Tibial artery (tissue), 4 donors: ENCODE measurements at regions of chr7 and their contacts with region 1.

Region 1: DNA sequence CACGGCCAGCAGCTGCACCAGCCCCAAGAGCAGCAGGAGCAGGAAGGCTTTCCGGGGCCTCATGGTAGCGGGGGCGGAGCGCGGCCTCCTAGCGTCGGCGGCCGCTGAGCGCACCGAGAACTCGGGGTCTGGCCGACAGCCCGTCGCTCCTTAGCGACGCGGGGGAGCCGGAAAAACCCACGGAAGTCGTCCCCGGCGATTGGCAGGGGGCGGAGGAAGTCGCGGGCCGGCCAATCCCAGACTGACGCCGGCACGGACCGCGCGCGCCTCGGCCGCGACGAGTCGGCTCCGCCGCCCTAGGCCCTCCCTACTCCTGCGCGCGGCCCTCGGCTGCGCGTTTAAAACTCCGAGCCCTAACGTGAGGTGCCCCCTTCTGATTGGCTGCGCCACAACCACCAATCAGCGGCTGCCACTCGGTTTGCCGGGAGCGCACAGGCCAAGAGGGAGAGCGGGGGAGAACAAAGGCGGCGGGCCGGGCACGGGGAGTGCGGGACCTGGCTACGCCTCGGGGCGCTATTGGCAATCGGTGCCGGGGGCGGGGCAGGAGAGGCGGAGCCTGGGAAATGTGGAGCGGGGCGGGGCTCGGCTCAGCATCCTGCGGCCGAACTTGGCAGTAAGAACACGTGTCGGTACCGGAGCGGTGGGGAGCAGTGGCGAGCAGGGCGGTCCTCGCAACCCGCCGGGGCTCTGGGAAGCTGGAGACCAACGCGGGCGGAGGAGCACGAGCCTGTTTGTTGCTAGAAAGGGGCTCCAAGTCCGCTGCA is at the start of gene PDIA4:
- DNase-seq: peak; percentile 99 to 100
- H3K4me3 ChIP-seq: peak within 1 kb of the TSS; percentile 73 to 82
- H3K27ac ChIP-seq: peak within 1 kb of the TSS; percentile 76 to 90
- H3K4me1 ChIP-seq: peaks cover 0 to 23% (median 19%) of the 10 kb centered on the region in 4 donors
- H3K27me3 ChIP-seq: no peaks in the 10 kb centered on the region
- CTCF ChIP-seq: peak in 1 of 2 experiments; percentile 26

Region 2: DNA sequence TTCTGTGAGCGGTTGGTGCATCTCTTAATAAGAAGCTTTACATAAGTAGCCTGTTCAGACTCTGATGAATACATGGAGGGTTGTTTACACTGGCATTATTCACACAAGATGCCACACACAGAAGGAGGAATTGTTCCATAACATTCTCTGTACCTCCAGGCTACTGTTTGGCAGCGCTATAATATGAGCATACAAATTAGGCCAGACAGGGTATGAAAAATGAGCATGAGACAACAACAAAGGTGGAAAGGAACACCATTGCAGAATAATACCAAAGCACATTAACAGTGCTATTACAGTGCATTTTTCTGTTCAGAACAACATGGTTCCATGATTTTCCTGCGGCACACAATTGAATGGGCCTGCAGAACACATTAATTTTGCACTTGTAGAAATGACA is 855.2 kb before region 1 on chr7:
- intact Hi-C with region 1: no loop called
- DNase-seq: no peak
- H3K4me3 ChIP-seq: no peak overlapping the region
- H3K27ac ChIP-seq: no peak overlapping the region
- H3K4me1 ChIP-seq: no peaks in the 10 kb centered on the region
- H3K27me3 ChIP-seq: peaks cover 0 to 5% of the 10 kb centered on the region in 2 donors
- CTCF ChIP-seq: no peak

Region 3: DNA sequence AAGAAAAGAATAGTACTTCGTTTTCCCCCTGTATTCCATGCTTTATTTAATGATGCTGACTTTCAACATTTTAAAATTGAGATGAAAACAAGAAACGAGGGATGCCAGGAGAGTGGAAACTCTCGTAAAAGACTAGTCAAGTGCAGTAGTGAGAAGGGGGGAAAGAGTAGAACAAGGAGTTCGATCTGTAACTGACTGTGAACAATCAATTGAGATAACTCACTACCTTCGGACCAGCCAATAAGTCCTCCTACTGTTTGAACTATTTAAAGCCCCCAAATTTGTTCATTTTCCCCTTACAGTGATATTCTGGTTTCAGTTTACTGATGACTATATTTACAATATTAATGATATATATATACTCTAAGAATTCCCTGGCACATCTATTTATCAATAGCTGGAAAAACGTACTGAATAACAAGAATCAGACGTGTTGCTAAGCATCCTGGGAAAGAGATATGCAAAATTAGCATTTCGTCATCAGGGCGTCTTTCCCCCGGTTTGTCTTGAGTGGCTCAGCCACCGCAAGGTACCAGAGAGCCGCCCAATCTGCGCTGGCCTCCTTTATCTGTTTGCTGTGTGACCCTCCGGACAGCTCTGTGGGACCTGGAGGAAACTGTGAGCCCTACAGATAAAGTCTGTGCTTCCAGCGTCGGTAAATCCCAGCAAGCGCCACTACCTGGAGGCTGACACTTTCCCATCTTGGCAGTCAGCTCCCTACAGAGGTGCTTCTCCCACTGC is 41.3 kb before region 1 on chr7:
- intact Hi-C with region 1: loop called (anchors 5 kb)
- DNase-seq: peak; percentile 76 to 89
- H3K4me3 ChIP-seq: peak overlapping the region; percentile 64 to 78
- H3K27ac ChIP-seq: peak overlapping the region; percentile 79 to 86
- H3K4me1 ChIP-seq: peaks cover 0 to 46% (median 26%) of the 10 kb centered on the region in 4 donors
- H3K27me3 ChIP-seq: no peaks in the 10 kb centered on the region
- CTCF ChIP-seq: no peak

Region 4: GRCh38 chr7:149321978-149322541 is 293.5 kb after region 1 on chr7:
- intact Hi-C with region 1: no loop called
- DNase-seq: no peak
- H3K4me3 ChIP-seq: peak overlapping the region; percentile 43 to 45
- H3K27ac ChIP-seq: peak overlapping the region in 1 of 2 donors; percentile 40
- H3K4me1 ChIP-seq: no peaks in the 10 kb centered on the region
- H3K27me3 ChIP-seq: peaks cover 0 to 13% of the 10 kb centered on the region in 2 donors
- CTCF ChIP-seq: no peak